T-cell (primary cell): ENCODE measurements at regions of chrX and their contacts with region 1.

Region 1: DNA sequence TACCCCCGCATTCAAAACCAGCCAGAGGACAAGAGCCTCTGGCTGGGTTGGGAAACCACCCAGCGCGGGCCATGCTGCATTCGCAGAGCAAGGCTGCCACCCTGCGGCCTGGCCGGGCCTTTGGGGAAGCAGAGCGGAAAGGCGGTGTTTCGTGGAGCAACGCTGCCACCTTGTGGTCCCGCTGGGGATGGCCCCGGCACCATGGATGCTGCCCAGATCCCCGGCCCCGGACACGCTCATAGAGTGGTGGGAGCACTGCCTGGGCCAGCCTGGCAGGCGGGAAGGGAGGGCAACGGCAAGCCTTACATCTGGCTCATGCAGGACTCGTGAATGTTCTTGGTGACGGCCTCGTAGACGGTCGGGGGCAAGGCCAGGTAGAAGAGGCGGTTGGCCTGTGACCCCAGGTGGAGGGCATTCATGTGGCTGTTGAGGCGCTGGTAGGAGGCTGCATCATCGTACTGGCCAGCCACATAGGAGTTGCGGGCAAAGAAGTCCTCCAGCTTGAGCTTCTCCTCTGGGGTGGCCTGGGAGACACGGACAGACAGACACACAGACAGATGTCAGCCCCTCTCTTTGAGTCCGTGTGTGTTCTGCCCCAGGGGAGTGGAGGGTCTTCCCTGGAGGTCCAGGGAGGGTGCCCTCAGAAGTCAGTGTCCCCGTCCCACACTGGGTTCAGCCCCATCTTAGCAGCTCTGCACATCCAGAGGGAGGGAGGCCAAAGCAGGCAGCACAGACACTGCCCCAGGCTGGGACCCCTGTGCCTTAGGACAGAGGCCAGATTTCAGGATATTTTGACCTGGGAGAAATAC is 11.6 kb downstream of the G6PD start:
- DNase-seq: peak; percentile 74 to 93 (median 85)
- ATAC-seq: peak; percentile 95 to 97 (median 96)
- H3K4me3 ChIP-seq: no peak overlapping the region
- H3K4me3 Mint-ChIP-seq: no peak overlapping the region
- H3K27ac ChIP-seq: peak overlapping the region; percentile 63
- H3K27ac Mint-ChIP-seq: peak overlapping the region; percentile 16 to 36
- H3K4me1 ChIP-seq: peaks cover 0 to 11% of the 10 kb centered on the region in 2 experiments
- H3K4me1 Mint-ChIP-seq: peaks cover 6 to 12% (median 11%) of the 10 kb centered on the region in 3 donors
- H3K27me3 ChIP-seq: no peaks in the 10 kb centered on the region
- H3K27me3 Mint-ChIP-seq: peaks cover 0 to 6% of the 10 kb centered on the region in 2 donors

Region 2: DNA sequence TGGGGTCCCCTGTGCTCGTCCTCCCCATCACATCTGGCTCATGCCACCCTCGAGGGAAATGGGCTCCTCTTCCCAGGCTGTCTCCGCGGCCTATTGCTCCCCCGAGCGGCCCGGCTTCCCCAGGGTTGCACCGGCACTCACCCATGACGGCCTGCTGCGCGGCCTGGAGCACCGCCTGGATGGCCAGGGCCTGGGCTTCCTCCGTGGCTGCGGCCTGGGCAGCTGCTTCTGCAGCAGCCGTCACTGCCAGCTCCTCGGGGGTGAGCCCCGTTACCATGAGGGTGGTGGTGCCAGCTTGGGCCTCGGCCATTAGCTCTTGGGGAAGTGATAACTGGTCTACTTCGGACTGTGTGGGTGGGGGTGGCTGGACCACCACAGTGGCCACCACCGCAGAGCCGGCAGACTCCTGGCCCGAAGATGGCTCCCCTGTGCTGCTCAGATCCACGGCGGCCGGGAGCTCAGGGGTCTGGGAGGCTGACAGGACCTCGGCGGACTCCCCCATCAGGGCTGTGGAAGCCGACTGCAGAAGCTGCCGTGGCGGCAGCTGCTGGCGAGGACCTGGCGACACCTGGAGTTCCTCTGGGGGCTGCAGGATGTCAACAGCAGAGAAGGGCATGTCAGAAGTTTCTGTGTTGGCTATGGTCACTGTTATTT is 582.6 kb before region 1 on chrX:
- CTCF ChIA-PET with region 1: no interaction called
- POLR2A ChIA-PET with region 1: interaction called in 1 of 2 experiments, 10 read pairs
- DNase-seq: no peak
- ATAC-seq: no peak
- H3K4me3 ChIP-seq: no peak overlapping the region
- H3K4me3 Mint-ChIP-seq: no peak overlapping the region
- H3K27ac ChIP-seq: no peak overlapping the region
- H3K27ac Mint-ChIP-seq: no peak overlapping the region
- H3K4me1 ChIP-seq: peaks cover 2 to 36% of the 10 kb centered on the region in 2 experiments
- H3K4me1 Mint-ChIP-seq: peaks cover 9 to 18% (median 13%) of the 10 kb centered on the region in 3 donors
- H3K27me3 ChIP-seq: no peaks in the 10 kb centered on the region
- H3K27me3 Mint-ChIP-seq: no peaks in the 10 kb centered on the region

Region 3: DNA sequence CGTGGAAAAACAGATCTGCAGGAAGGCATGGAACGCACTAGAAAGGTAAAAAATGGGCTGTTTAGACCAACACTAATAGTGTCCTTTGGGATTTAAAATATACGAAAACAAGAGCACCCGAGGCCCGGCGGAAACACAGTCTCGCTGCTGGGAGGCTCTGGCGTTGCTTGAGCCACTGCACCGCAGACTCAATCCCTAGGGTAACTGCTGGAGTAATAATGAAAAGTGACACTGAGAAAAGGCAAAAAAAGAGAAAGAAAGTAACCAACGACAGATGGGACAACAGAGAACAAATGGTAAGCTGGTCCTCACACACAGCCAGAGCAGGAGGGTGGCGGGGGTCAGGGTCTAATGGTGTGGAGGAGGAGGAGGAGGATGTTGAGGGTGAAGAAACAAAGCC is 530.8 kb before region 1 on chrX:
- CTCF ChIA-PET with region 1: interaction called in 1 of 2 experiments, 6 read pairs
- POLR2A ChIA-PET with region 1: interaction called in 1 of 2 experiments, 11 read pairs
- DNase-seq: no peak
- ATAC-seq: no peak
- H3K4me3 ChIP-seq: no peak overlapping the region
- H3K4me3 Mint-ChIP-seq: no peak overlapping the region
- H3K27ac ChIP-seq: no peak overlapping the region
- H3K27ac Mint-ChIP-seq: no peak overlapping the region
- H3K4me1 ChIP-seq: peaks cover 0 to 16% of the 10 kb centered on the region in 2 experiments
- H3K4me1 Mint-ChIP-seq: peaks cover 8 to 22% (median 10%) of the 10 kb centered on the region in 3 donors
- H3K27me3 ChIP-seq: no peaks in the 10 kb centered on the region
- H3K27me3 Mint-ChIP-seq: peaks cover 0 to 14% of the 10 kb centered on the region in 2 donors

Region 4: DNA sequence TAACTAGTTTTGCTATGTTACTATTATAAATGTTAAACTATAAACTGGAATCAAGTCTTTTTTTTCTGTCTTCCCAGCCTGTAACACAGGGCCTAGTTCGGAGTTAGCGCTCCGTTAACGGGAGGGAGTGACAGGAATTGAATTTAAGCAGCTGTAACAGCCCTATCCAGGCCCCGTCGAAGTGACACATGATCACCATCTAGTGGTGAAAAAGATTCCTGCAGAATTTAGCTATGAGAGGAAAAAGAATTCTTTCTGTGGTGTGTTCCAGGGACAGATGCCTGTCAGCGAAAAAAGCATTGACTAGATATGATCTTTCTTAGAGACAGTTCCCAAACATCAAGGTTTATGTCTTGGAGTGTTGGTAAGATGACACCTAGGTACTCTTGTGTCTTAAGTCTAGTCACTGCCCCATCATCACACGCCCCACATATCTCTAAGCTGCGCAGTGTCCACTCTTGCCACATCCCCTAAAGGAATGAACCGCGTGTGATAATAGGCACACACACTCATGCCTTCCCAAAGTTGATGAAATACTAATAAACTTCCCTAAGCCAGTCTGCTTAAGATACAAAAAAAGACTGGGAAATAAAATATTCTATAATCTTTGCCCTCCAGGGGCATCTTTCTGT is 213.8 kb after region 1 on chrX:
- CTCF ChIA-PET with region 1: no interaction called
- POLR2A ChIA-PET with region 1: no interaction called
- DNase-seq: peak in 26 of 35 experiments; percentile 10 to 83 (median 33)
- ATAC-seq: peak; percentile 54 to 71 (median 59)
- H3K4me3 ChIP-seq: peak overlapping the region in 1 of 2 donors; percentile 15
- H3K4me3 Mint-ChIP-seq: peak overlapping the region in 2 of 3 donors; percentile 46 to 56
- H3K27ac ChIP-seq: peak overlapping the region; percentile 29
- H3K27ac Mint-ChIP-seq: peak overlapping the region in 1 of 2 donors; percentile 44
- H3K4me1 ChIP-seq: peaks cover 2 to 27% of the 10 kb centered on the region in 2 experiments
- H3K4me1 Mint-ChIP-seq: peaks cover 21 to 42% (median 34%) of the 10 kb centered on the region in 3 donors
- H3K27me3 ChIP-seq: no peaks in the 10 kb centered on the region
- H3K27me3 Mint-ChIP-seq: peaks cover 0 to 16% of the 10 kb centered on the region in 2 donors